ENCODE measurements at regions of chr17 and their contacts with region 1.

Region 1: DNA sequence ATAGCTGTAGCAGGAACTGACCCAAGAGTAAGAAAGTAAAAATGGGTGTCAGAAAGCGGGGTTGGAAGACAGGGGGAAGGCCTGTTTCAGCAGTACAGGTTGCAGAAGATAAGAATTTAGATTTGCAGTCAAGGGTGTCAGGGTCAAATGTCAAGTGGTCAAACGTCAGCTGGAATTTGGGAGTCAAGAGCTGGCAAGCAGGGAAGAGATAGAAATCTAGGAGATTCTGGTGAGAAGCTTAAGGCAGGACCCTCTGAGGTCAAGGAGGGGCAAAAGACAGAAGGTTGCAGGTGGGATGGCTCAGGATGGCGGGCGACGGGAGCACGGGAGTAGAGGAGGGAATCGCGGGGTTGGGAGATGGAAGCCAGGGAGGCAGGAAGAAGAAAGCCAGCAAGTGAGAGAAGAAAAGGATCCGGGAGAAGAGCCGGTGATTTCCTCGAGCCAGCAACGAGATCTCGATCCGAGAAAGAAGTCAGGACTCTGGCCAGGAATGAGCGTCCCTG is 335 bp downstream of the SLC25A35 start:
- DNase-seq: no peak
- ATAC-seq: peak; percentile 48
- H3K4me3 ChIP-seq: peak overlapping the region; percentile 48
- H3K27ac ChIP-seq: peak overlapping the region; percentile 89 to 93
- H3K4me1 ChIP-seq: peaks cover 16% of the 10 kb centered on the region
- CTCF ChIP-seq: no peak
- EP300 ChIP-seq: no peak
- POLR2A ChIP-seq: no peak
- RAD21 ChIP-seq: no peak

Region 2: GRCh38 chr17:8209909-8210760 is 84.7 kb before region 1 on chr17 and contains the start of gene AURKB:
- CTCF ChIA-PET with region 1: no interaction called
- POLR2A ChIA-PET with region 1: interaction called, 10 read pairs
- DNase-seq: peak; percentile 98
- ATAC-seq: peak; percentile 94 to 99
- H3K4me3 ChIP-seq: peak within 1 kb of the TSS; percentile 64
- H3K27ac ChIP-seq: peak within 1 kb of the TSS; percentile 78 to 89
- H3K4me1 ChIP-seq: peaks cover 19% of the 10 kb centered on the region
- CTCF ChIP-seq: no peak
- EP300 ChIP-seq: no peak
- POLR2A ChIP-seq: peak; percentile 50; the same call in 1 of the 2 replicates
- RAD21 ChIP-seq: no peak
- polyA plus RNA-seq, gene AURKB: 51.0 and 59.5 TPM in 2 replicates

Region 3: GRCh38 chr17:8222630-8223356 is 72.1 kb before region 1 on chr17:
- CTCF ChIA-PET with region 1: interaction called, 29 read pairs
- POLR2A ChIA-PET with region 1: interaction called, 44 read pairs
- DNase-seq: peak; percentile 85 to 98
- ATAC-seq: peak; percentile 38 to 64
- H3K4me3 ChIP-seq: peak overlapping the region; percentile 78
- H3K27ac ChIP-seq: peak overlapping the region; percentile 95 to 97
- H3K4me1 ChIP-seq: peaks cover 32% of the 10 kb centered on the region
- CTCF ChIP-seq: no peak
- EP300 ChIP-seq: no peak
- POLR2A ChIP-seq: peak; percentile 85
- RAD21 ChIP-seq: no peak

Region 4: GRCh38 chr17:8248751-8249607 is 45.9 kb before region 1 on chr17 and contains the start of gene PFAS:
- CTCF ChIA-PET with region 1: interaction called, 18 read pairs
- POLR2A ChIA-PET with region 1: interaction called, 70 read pairs
- DNase-seq: peak; percentile 97
- ATAC-seq: peak; percentile 62 to 69
- H3K4me3 ChIP-seq: peak within 1 kb of the TSS; percentile 74
- H3K27ac ChIP-seq: peak within 1 kb of the TSS; percentile 97 to 99
- H3K4me1 ChIP-seq: peaks cover 8% of the 10 kb centered on the region
- CTCF ChIP-seq: no peak
- EP300 ChIP-seq: no peak
- POLR2A ChIP-seq: peak; percentile 91
- RAD21 ChIP-seq: no peak
- polyA plus RNA-seq, gene PFAS: 51.9 and 64.5 TPM in 2 replicates

Region 5: DNA sequence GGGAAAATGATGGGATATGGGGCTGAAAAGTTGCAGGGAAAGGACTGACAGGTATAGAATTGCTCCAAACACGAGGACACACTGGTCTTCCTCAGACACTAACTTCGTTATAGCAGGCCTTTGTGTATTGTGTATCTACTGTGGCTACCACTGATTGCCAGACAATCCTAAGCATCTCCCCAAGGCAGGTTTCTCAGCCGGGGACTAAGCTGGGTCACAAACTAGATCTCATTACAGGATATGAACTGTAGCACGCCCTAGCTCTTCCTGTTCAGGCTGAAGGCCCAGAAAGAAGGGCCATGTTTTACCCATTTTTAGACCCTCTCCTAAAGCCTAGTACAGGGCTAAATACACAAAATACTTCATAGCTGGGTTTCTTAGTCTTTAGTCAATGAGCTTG is 11.5 kb before region 1 on chr17:
- CTCF ChIA-PET with region 1: interaction called, 12 read pairs
- POLR2A ChIA-PET with region 1: interaction called, 9 read pairs
- DNase-seq: no peak
- ATAC-seq: no peak
- H3K4me3 ChIP-seq: no peak overlapping the region
- H3K27ac ChIP-seq: no peak overlapping the region
- H3K4me1 ChIP-seq: peaks cover 5% of the 10 kb centered on the region
- CTCF ChIP-seq: no peak
- EP300 ChIP-seq: no peak
- POLR2A ChIP-seq: no peak
- RAD21 ChIP-seq: no peak

Region 6: DNA sequence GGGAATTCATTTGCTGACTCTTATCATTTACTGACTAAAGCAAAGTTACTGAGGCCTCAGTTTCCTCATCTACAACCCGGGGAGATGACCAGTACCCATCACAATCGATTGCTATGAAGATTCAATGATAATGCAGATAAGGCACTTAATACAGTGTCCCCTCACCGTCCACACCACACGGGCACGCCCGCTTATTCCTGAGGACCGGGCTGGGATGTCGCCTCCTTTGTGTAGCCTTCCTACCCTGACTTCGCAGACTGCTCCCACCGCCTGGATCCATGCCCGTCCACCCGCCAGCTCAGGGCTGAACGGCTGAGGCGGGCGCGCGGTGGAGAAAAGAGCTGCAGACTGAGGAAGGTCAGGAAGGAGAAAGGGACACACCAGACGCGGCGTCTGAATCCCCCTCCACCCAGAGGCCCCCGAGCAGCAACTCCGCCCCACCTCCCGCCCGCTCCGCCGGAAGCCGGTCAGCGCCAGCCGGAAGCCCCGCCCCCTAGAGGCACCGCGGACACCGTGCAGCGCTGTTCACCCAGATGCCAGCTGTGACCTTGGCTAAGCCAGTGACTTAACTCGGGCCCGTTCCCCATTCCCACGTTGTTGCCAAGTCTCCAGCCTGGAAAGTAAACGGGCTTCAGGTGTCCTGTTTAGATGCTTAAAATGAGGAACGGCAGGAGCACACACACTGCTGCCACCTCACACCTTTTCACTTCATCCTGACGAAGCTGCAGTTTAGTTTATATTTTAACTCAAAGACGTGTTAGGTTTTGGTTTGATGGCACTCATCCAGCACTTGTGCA is 81.6 kb after region 1 on chr17 and contains the start of gene KRABD2:
- CTCF ChIA-PET with region 1: no interaction called
- POLR2A ChIA-PET with region 1: interaction called, 14 read pairs
- DNase-seq: peak; percentile 92 to 99
- ATAC-seq: peak; percentile 93 to 95
- H3K4me3 ChIP-seq: peak within 1 kb of the TSS; percentile 50
- H3K27ac ChIP-seq: peak within 1 kb of the TSS; percentile 76 to 93
- H3K4me1 ChIP-seq: peaks cover 55% of the 10 kb centered on the region
- CTCF ChIP-seq: peak; percentile 38
- EP300 ChIP-seq: no peak
- POLR2A ChIP-seq: peak; percentile 93
- RAD21 ChIP-seq: no peak

Region 7: DNA sequence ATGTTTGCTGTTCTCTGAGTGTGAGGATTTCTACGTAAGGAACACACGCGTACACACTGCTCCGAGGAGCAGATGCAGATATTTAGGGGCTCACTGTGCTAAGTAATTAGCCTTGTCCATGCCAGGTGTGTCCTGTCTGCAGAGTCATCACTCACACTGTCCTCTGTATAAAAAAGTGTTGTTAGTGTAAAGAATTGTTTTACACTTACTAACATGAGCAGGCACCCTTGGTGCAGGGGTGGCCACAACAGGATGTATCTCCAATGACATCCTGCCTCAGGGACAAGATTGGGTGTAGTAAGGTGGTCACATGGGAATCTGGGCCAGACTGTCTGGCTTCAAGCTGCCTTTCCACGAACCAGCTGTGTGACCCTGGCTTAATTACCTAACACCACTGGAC is 204.7 kb after region 1 on chr17:
- CTCF ChIA-PET with region 1: no interaction called
- POLR2A ChIA-PET with region 1: no interaction called
- DNase-seq: no peak
- ATAC-seq: no peak
- H3K4me3 ChIP-seq: no peak overlapping the region
- H3K27ac ChIP-seq: no peak overlapping the region
- H3K4me1 ChIP-seq: no peaks in the 10 kb centered on the region
- CTCF ChIP-seq: no peak
- EP300 ChIP-seq: no peak
- POLR2A ChIP-seq: no peak
- RAD21 ChIP-seq: no peak

Measured in A549 (cell line).